Mammary epithelial cell (primary cell): ENCODE measurements at regions of chr9 and their contacts with region 1.

Region 1: DNA sequence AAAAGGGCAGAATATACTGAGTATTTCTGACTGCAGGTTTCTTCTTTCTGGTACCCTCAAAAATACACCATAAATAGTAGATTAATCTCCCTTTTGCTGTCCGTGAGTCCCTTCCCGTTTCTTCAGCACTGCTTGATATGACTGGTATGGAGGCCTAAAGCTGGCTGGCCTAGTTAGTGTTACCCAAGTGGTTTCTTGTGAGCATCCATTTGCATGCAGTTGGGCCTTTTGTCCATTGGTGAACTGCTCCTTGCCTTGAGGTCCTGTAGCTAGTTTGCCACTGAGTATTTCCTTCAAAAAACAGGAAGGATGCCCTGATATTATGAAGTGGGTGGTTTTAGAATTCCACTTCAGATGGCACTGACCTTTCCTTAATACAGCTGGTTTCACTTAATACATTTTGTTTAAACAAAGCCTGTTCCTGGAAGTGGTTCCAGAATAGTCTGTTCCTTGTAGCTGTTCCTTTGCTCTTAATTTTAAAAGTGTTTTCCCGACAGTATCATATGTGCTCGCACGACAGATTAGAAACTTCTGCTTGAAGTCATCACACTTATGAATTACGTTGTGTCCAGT is 40.0 kb upstream of the ABL1 start:
- DNase-seq: no peak
- H3K4me3 ChIP-seq: no peak overlapping the region
- H3K27ac ChIP-seq: no peak overlapping the region
- H3K4me1 ChIP-seq: no peaks in the 10 kb centered on the region
- H3K27me3 ChIP-seq: no peaks in the 10 kb centered on the region
- CTCF ChIP-seq: no peak

Region 2: DNA sequence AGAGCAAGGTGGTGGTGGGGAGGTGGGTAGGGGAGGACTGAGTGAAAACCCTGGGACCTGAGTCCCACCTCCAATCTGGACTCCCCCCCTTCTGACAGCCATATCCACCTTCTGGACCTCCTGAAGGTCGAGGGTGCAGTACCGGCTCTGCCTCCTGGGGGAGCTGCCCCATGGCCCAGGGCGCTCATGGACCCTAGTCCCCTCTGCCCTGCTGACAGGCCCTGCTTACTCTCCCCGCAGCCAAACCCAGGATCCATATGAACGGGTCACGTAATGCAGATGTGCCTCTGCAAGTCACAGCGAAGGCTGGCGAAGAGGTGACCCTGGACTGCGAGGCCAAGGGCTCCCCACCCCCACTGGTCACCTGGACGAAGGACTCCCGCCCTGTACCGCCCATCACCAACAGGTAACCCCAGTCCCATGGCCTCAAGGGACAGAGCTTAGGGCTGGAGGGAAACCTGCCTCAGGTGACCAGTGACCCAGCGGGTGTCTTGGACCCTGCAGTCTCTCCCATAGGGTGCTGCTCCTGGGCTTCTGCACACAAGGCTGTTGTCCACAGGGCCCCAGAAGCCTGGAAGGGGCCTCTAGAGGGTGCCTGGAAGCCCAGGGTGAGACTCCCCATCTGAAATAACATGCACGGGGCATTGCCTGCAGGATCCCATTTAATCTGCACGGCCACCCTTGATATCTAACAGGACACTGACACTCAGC is 467.8 kb before region 1 on chr9:
- CTCF ChIA-PET with region 1: no interaction called
- dilution Hi-C with region 1: no loop called
- in situ Hi-C with region 1: no loop called
- intact Hi-C with region 1: no loop called
- DNase-seq: no peak
- H3K4me3 ChIP-seq: no peak overlapping the region
- H3K27ac ChIP-seq: no peak overlapping the region
- H3K4me1 ChIP-seq: peaks cover 12% of the 10 kb centered on the region
- H3K27me3 ChIP-seq: peaks cover 4% of the 10 kb centered on the region
- CTCF ChIP-seq: peak in 1 of 2 donors; percentile 8

Region 3: DNA sequence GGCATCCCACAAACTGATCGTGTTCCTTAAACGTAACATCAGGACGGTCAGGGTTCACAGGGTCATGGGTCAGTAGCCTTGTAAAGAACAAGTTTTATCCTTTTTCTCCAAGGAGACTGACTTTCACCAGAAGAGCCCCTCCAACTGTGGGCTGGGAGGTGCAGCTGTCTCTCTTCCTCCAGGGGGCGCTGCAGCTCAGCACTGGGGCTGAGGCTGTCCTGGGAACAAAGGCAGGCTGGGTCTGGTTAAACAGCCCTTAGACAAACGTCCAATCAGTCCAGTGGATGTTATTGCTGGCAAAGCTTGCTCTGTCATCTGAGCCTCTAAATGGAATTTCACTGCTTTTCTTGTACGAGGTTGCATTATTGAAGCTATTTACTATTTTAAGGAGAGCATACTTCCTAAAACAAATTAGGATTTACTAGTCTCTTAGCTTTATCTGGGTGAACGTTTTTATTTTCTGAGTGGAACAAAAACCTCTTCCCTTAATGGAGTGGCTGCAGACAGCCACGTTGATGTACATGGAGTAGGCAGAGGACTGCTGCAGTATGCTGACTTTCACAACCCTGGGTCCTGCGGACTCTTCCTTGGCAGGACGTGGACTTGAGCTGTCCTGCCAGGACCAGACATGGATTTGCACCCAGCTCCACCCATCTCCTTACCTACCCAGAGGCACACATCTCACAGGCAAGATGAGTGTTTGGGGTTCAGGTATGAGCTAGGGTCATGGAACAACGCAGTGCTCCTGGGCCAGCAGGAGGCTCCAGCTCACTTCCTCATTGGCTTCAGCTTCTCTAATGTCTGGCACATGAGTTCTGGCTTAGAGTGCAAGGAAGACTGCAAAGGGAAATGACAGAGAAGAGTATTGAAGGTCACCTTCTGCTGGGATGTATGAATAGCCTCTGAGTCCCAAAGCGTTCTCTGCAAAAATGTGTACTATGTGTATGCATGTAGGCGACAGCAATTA is 93.7 kb before region 1 on chr9:
- CTCF ChIA-PET with region 1: no interaction called
- dilution Hi-C with region 1: loop called (anchors 5 kb)
- in situ Hi-C with region 1: no loop called
- intact Hi-C with region 1: no loop called
- DNase-seq: peak; percentile 44
- H3K4me3 ChIP-seq: no peak overlapping the region
- H3K27ac ChIP-seq: no peak overlapping the region
- H3K4me1 ChIP-seq: peaks cover 7% of the 10 kb centered on the region
- H3K27me3 ChIP-seq: no peaks in the 10 kb centered on the region
- CTCF ChIP-seq: peak; percentile 88 to 93